A673 (cell line): ENCODE measurements at regions of chr21 and their contacts with region 1.

Region 1: DNA sequence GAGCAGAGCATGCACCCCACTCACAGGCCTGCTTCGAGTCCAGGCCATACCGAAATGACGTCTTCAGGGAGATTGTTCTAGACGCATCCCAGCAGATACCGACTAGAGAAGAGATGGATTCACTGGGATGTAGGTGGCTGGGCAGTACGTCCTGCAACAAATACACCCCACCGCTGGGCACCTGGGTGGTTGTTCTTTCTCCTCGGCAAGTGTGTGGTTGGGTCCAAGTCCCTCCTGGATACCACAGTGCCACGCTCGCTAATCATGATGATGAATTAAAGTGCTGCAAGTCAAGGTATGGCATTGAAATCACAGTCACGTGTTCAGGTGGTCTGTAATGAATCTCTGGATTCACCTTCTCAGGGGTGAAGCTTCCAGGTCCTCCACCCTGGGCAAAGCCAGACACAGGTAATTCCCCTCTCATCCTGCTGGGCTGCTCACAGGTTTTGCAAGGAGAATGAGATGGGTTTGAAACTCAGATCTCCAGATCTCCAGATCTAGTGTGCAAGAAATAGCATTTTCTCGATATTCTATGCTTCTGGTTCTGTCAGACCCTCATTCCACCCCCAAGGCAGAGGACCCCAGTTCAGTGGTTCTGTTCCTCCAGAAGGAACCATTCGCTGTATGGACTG is 45.7 kb downstream of the UBASH3A start:
- DNase-seq: no peak
- H3K4me3 ChIP-seq: no peak overlapping the region
- H3K27ac ChIP-seq: no peak overlapping the region
- H3K4me1 ChIP-seq: peaks cover 6% of the 10 kb centered on the region
- H3K27me3 ChIP-seq: no peaks in the 10 kb centered on the region
- CTCF ChIP-seq: no peak

Region 2: GRCh38 chr21:42145569-42146272 is 303.7 kb before region 1 on chr21:
- CTCF ChIA-PET with region 1: no interaction called
- POLR2A ChIA-PET with region 1: no interaction called
- intact Hi-C with region 1: loop called (anchors 5 kb)
- DNase-seq: peak; percentile 70
- H3K4me3 ChIP-seq: no peak overlapping the region
- H3K27ac ChIP-seq: no peak overlapping the region
- H3K4me1 ChIP-seq: no peaks in the 10 kb centered on the region
- H3K27me3 ChIP-seq: no peaks in the 10 kb centered on the region
- CTCF ChIP-seq: peak; percentile 89

Region 3: DNA sequence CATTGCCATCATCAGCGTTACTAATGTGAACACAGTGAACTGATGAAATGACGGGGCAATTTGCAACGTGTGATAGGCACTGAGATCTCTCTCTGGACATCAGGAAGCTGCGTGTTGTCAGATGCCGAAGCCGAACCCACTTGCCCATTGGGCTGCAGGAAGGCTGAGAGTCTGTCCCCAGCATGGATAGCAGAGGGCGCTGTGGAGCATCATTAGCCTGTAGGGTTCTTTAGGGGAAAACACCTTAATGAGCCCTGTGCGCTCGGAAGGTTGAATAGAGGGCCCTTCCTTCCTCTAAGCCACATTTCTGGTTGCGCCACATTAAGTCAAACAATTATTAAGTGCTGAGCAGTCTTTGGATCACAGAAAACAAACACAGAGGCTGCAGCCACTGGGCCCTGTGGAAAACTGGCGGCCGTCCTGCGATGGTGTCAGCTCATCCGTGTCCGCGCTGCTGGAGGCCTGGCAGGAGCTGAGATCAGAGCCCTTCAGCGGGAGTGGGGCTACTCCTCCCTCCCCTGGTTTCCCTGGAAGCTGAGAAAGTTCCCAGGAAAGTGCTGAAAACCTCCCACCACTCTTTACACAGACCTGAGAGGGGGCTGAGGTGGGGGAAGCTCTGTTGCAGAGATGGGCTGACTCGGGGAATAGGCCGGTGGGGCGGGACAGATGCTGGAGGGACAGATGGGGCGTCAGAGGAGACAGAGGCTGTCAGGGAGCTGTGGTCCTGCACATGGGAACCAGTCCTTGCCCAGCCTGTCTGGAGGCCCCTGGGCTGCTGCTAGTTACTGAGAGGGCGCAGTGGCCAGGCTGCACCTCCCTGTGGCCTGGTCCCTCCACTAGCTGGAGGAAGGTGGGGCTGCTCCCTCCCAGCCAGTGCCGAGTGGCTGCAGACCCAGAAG is 111.3 kb before region 1 on chr21:
- CTCF ChIA-PET with region 1: no interaction called
- POLR2A ChIA-PET with region 1: no interaction called
- intact Hi-C with region 1: loop called (anchors 2 kb)
- DNase-seq: peak; percentile 67
- H3K4me3 ChIP-seq: no peak overlapping the region
- H3K27ac ChIP-seq: no peak overlapping the region
- H3K4me1 ChIP-seq: no peaks in the 10 kb centered on the region
- H3K27me3 ChIP-seq: peaks cover 15% of the 10 kb centered on the region
- CTCF ChIP-seq: peak; percentile 81